ENCODE measurements at regions of chr3 and their contacts with region 1.

Region 1: DNA sequence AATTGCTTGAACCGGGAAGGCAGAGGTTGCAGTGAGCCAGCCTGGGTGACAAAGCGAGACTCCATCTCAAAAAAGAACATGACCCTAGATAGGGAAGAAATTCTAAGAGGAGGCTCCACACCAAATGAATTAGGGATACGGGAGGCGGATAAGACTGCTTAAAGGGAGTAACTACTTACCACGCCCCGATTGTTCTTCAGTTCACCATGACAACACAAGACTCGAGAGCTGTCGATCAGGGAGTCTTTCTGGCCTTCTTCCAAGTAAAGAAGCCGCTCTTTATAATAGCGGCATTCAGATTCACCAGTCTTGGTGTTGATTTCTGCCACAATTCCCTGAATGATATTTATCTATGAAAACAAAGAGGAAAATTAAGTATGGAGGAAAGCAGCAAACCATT is 53.9 kb upstream of the TASOR start:
- DNase-seq: no peak
- H3K4me3 Mint-ChIP-seq: no peak overlapping the region
- H3K27ac Mint-ChIP-seq: no peak overlapping the region
- H3K4me1 Mint-ChIP-seq: peaks cover 23% of the 10 kb centered on the region
- H3K27me3 Mint-ChIP-seq: no peaks in the 10 kb centered on the region

Region 2: GRCh38 chr3:56753206-56753820 is 16.3 kb after region 1 on chr3:
- intact Hi-C with region 1: loop called (anchors 2 kb)
- DNase-seq: peak; percentile 82
- H3K4me3 Mint-ChIP-seq: peak overlapping the region; percentile 67
- H3K27ac Mint-ChIP-seq: peak overlapping the region; percentile 80
- H3K4me1 Mint-ChIP-seq: peaks cover 62% of the 10 kb centered on the region
- H3K27me3 Mint-ChIP-seq: no peaks in the 10 kb centered on the region